ENCODE measurements at regions of chr17 and their contacts with region 1.

Region 1: DNA sequence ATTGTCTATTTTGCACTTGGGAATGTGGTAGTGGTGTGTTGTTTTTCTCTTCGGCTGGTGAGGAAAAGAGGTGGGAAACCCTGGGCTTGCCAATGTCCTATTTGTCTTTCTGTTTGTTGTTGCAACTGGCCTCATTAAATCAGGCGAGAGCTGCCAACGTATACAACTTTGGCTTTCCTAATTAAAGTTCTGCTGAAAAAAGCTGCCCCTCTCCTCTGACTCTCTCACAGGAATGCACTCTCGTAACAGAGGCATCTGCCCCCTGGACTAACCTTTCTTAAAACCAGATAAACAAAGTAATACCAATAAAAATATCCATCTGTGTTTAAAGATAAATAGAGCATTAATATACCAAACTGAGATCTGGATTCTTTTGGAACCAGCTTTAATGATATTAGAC is 7.8 kb downstream of the CDRT15 start:
- DNase-seq: no peak
- ATAC-seq: no peak
- H3K4me3 ChIP-seq: no peak overlapping the region
- H3K27ac ChIP-seq: no peak overlapping the region
- H3K4me1 ChIP-seq: no peaks in the 10 kb centered on the region
- H3K27me3 ChIP-seq: no peaks in the 10 kb centered on the region
- CTCF ChIP-seq: no peak
- POLR2A ChIP-seq: no peak

Region 2: DNA sequence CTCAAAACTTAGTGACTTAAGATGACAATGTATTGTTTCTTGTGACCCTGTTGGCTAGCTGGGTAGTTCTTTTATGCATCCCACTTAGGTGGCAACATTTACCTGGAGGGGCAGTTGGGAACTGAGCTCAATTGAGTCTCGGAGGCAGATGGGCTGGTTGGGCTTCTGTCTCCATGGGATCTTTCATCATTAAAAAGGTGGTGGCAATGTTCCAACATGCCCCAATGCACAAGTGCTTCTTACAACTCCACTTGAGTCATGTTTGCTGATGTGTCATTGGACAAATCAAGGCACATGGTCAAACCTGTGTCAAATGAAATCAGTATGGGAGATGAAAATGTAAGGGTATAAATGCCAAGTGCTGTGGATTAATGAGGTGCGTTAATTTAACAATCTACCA is 60.3 kb after region 1 on chr17:
- intact Hi-C with region 1: loop called in 1 of 2 experiments (anchors 10 kb)
- DNase-seq: no peak
- ATAC-seq: no peak
- H3K4me3 ChIP-seq: no peak overlapping the region
- H3K27ac ChIP-seq: no peak overlapping the region
- H3K4me1 ChIP-seq: no peaks in the 10 kb centered on the region
- H3K27me3 ChIP-seq: no peaks in the 10 kb centered on the region
- CTCF ChIP-seq: no peak
- POLR2A ChIP-seq: no peak